Esophagus squamous epithelium (tissue), 5 donors: ENCODE measurements at regions of chr11 and their contacts with region 1.

Region 1: DNA sequence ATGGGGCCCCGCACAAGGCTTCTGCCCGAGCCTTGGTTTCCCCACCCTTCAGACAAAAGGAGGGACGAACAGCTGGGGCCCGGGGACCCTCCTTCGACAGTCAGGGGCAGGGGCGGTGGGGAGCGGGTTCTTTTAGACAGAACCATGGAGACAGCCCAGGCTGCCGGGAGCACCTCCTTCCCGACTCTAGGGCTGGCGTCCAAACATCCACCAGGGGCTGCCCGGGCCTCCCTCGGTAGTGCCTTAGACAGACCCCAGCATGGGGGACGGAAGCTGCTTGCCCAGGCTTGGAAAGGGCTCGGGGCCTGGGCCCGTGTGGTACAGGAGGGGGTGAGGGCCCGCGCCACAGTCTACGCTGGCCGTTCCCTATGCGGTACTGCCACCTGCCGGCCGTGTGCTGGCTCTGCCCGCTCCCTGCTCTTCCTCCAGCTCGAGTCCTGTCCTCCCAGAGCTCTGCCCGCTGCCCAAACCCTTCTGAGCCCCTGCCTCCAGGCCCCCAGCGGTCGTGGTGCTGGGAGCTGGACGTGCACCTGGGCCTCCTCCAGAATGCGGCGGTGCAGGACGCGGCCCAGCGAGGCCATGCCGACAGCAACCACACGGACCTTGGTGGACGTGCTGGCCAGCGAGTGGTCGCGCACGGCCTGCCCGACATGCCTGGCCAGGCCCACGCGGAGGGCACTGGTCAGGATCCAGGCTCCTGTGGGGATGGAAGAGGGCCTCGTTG is 20.1 kb downstream of the TSSC4 start:
- DNase-seq: no peak
- H3K4me3 ChIP-seq: peak overlapping the region in 2 of 4 donors; percentile 20 to 42
- H3K27ac ChIP-seq: no peak overlapping the region
- H3K4me1 ChIP-seq: peaks cover 0 to 16% (median 11%) of the 10 kb centered on the region in 3 donors
- H3K27me3 ChIP-seq: peaks cover 0 to 35% (median 0%) of the 10 kb centered on the region in 4 donors
- CTCF ChIP-seq: peak; percentile 82 to 95 (median 92)
- POLR2A ChIP-seq: no peak

Region 2: DNA sequence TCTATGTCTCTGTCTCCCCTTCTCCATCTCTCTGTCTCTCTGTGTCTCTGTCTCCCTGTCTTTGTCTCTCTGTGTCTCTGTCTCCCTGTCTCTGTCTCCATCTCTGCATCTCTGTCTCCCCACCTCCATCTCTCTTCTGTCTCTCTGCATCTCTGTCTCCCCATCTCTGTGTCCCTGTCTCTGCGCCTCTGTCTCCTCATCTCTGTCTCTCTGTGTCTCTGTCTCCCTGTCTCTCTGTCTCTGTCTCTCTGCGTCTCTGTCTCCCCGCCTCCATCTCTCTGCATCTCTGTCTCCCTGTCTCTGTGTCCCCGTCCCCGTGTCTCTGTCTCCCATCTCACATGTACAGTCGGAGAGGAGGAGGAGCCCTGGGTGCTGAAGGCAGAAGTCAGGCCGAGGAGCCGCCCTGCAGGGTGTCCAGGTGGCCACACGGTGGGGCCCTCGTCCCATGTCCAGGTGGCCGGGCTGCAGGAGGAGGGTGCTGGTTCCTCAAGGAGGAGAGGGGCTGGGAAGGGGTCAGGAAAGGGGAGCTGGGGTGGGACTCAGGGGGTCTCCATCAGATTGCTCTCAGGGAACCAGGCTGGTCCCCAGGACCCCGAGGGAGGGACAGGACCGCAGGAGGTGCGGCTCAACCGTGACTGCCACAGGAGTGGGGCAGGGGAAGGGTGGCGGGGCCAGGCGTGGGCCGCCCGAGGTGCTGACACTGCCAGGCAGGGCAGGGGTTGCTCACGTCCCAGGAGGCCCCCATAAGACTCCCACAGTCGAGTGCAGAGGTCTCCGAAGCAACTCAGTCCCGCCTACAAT is 223.5 kb before region 1 on chr11:
- intact Hi-C with region 1: loop called (anchors 2 kb)
- DNase-seq: no peak
- H3K4me3 ChIP-seq: no peak overlapping the region
- H3K27ac ChIP-seq: no peak overlapping the region
- H3K4me1 ChIP-seq: peaks cover 0 to 21% (median 5%) of the 10 kb centered on the region in 3 donors
- H3K27me3 ChIP-seq: peaks cover 0 to 48% (median 0%) of the 10 kb centered on the region in 4 donors
- CTCF ChIP-seq: peak; percentile 70 to 96 (median 92)
- POLR2A ChIP-seq: no peak

Region 3: DNA sequence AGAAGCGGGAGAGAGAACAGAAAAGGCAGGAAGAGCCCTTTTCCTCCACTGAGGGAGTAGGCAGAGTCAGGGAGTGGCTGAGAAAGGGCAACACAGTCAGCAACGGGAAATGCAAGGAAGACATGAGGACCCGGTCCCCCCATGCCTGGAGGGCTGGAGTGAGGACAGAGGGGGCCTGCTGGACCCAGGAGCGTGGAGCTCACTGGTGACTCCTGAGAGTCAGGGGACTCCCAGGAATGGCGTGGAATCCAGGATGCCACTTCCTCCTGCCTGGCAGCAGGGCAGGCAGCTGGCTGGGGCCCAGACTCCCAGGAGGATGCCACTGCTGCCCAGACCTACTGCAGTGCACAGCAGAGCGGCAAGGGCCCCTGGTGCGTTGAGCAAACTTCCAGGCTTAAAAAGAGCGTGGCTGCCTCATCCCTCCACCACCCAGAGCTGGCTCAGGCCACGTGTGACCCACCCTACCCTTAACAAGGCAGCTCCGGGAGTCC is 130.3 kb before region 1 on chr11:
- intact Hi-C with region 1: no loop called
- DNase-seq: no peak
- H3K4me3 ChIP-seq: no peak overlapping the region
- H3K27ac ChIP-seq: no peak overlapping the region
- H3K4me1 ChIP-seq: peaks cover 0 to 3% (median 0%) of the 10 kb centered on the region in 3 donors
- H3K27me3 ChIP-seq: peaks cover 0 to 62% (median 0%) of the 10 kb centered on the region in 4 donors
- CTCF ChIP-seq: no peak
- POLR2A ChIP-seq: no peak

Region 4: GRCh38 chr11:2305140-2305840 is 115.4 kb before region 1 on chr11:
- intact Hi-C with region 1: loop called (anchors 2 kb)
- DNase-seq: peak; percentile 29
- H3K4me3 ChIP-seq: peak overlapping the region in 1 of 4 donors; percentile 19
- H3K27ac ChIP-seq: peak overlapping the region; percentile 57 to 89 (median 78)
- H3K4me1 ChIP-seq: peaks cover 30 to 57% (median 37%) of the 10 kb centered on the region in 3 donors
- H3K27me3 ChIP-seq: no peaks in the 10 kb centered on the region
- CTCF ChIP-seq: peak; percentile 93 to 97 (median 95)
- POLR2A ChIP-seq: no peak